ENCODE measurements at regions of chr2 and their contacts with region 1.

Region 1: GRCh38 chr2:226791487-226792081 is 8.0 kb downstream of the IRS1 start:
- DNase-seq: peak; percentile 90 to 96 (median 93)
- H3K4me3 ChIP-seq: peak overlapping the region; percentile 42 to 58
- H3K4me3 Mint-ChIP-seq: peak overlapping the region; percentile 95 to 98 (median 96)
- H3K27ac ChIP-seq: peak overlapping the region; percentile 76
- H3K27ac Mint-ChIP-seq: peak overlapping the region; percentile 97 to 99 (median 99)
- H3K4me1 ChIP-seq: peaks cover 19% of the 10 kb centered on the region
- H3K4me1 Mint-ChIP-seq: peaks cover 18 to 41% (median 30%) of the 10 kb centered on the region in 4 donors
- H3K27me3 ChIP-seq: no peaks in the 10 kb centered on the region
- H3K27me3 Mint-ChIP-seq: no peaks in the 10 kb centered on the region

Region 2: DNA sequence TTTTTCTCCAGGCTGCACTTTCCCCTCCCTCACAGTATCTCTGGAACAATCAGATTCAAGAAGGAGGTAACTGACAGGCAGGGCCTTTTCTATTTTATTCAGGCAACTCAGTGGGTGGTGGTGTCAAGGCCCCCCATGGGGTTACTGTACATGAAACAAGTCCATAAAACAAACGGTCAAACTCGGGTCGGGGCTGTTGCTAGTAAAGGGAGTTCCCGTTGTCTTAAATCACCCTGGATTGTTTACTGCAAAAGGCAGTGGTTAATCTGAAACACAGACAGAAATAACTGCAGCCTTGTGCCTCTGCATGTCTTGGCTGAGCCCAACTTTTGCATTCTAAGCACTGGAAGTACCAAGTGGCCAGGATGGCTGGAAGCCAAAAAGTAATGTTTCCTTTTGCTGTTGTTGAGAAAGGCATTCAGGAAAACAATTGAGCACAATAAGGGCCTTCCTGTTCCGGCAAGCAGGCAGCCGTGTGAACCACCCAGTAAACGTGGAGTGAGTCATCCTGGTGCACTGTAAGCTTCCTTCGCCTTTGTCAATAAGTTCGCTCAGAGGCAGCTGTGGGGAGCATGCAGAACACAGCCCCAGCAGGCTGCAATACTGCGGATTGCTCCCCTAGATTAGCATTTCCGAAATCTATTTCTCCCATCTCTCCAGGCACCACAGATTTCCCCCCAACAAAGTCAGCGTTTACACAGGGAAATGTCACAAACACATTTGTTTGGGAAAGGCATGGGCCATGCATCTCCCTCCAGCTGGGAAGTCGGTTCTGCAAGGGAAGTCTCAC is 141.5 kb before region 1 on chr2:
- CTCF ChIA-PET with region 1: no interaction called
- POLR2A ChIA-PET with region 1: interaction called, 6 read pairs
- intact Hi-C with region 1: loop called (anchors 5 kb)
- DNase-seq: peak; percentile 39 to 68 (median 48)
- H3K4me3 ChIP-seq: no peak overlapping the region
- H3K4me3 Mint-ChIP-seq: peak overlapping the region; percentile 11 to 79 (median 52)
- H3K27ac ChIP-seq: no peak overlapping the region
- H3K27ac Mint-ChIP-seq: peak overlapping the region; percentile 61 to 93 (median 84)
- H3K4me1 ChIP-seq: peaks cover 30% of the 10 kb centered on the region
- H3K4me1 Mint-ChIP-seq: peaks cover 21 to 40% (median 31%) of the 10 kb centered on the region in 4 donors
- H3K27me3 ChIP-seq: no peaks in the 10 kb centered on the region
- H3K27me3 Mint-ChIP-seq: no peaks in the 10 kb centered on the region

Region 3: GRCh38 chr2:226772389-226773179 is 19.0 kb before region 1 on chr2:
- CTCF ChIA-PET with region 1: interaction called, 7 read pairs
- POLR2A ChIA-PET with region 1: interaction called, 11 read pairs
- intact Hi-C with region 1: loop called (anchors 1 kb)
- DNase-seq: peak in 4 of 5 donors; percentile 25 to 48 (median 36)
- H3K4me3 ChIP-seq: peak overlapping the region in 1 of 2 donors; percentile 16
- H3K4me3 Mint-ChIP-seq: peak overlapping the region; percentile 61 to 84 (median 73)
- H3K27ac ChIP-seq: no peak overlapping the region
- H3K27ac Mint-ChIP-seq: peak overlapping the region in 3 of 7 donors; percentile 5 to 43 (median 26)
- H3K4me1 ChIP-seq: peaks cover 22% of the 10 kb centered on the region
- H3K4me1 Mint-ChIP-seq: peaks cover 19 to 26% (median 23%) of the 10 kb centered on the region in 4 donors
- H3K27me3 ChIP-seq: no peaks in the 10 kb centered on the region
- H3K27me3 Mint-ChIP-seq: no peaks in the 10 kb centered on the region

Region 4: GRCh38 chr2:227324995-227325838 is 533.6 kb after region 1 on chr2 and contains the start of gene MFF:
- CTCF ChIA-PET with region 1: no interaction called
- POLR2A ChIA-PET with region 1: no interaction called
- intact Hi-C with region 1: loop called (anchors 1 kb)
- DNase-seq: peak; percentile 92 to 96 (median 93)
- H3K4me3 ChIP-seq: peak within 1 kb of the TSS; percentile 85 to 91
- H3K4me3 Mint-ChIP-seq: peak within 1 kb of the TSS; percentile 95 to 97 (median 96)
- H3K27ac ChIP-seq: peak within 1 kb of the TSS; percentile 84
- H3K27ac Mint-ChIP-seq: peak within 1 kb of the TSS; percentile 95 to 98 (median 96)
- H3K4me1 ChIP-seq: peaks cover 30% of the 10 kb centered on the region
- H3K4me1 Mint-ChIP-seq: peaks cover 21 to 59% (median 36%) of the 10 kb centered on the region in 4 donors
- H3K27me3 ChIP-seq: no peaks in the 10 kb centered on the region
- H3K27me3 Mint-ChIP-seq: no peaks in the 10 kb centered on the region
- total RNA-seq, gene MFF: 58.0 to 64.3 TPM